ENCODE measurements at regions of chrX and their contacts with region 1.

Region 1: DNA sequence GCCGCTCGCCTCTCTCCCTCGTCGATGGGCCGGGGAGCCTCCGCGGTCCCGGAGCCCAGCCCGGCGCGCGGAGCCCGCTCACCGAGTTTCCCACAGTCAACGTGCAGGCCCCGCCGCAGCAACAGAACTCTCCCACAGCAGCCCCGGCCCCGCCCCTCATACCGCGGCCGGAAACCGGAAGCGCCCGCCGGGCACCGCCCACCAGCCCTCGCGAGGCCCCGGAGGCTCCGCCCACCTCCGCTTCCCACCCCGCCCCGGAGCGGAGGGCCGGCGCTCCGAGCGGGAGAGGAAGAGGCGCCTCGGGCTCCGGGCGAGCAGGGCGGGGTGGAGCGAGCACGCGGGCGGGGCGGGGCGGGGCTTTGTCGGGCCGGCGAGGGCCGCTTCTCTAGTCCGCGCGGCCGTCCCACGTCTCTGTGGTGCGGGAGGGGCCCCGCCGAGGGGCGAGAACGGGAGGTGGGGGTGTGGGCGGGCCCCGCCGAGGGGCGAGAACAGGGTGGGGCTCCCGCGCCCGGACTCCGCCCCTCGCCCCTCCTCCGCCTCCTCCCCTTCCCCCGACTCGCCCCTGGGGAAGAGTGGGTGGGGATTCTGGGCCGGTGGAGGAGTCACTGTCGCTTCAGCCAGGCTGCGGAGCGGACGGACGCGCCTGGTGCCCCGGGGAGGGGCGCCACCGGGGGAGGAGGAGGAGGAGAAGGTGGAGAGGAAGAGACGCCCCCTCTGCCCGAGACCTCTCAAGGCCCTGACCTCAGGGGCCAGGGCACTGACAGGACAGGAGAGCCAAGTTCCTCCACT is at the starts of genes ABCD1 and BCAP31:
- DNase-seq: peak; percentile 82 to 93 (median 91)
- ATAC-seq: peak; percentile 88
- H3K4me3 ChIP-seq: peak within 1 kb of the TSS; percentile 55
- H3K4me3 Mint-ChIP-seq: peak within 1 kb of the TSS; percentile 75 to 95 (median 86)
- H3K27ac ChIP-seq: peak within 1 kb of the TSS; percentile 80
- H3K27ac Mint-ChIP-seq: peak within 1 kb of the TSS in 8 of 9 donors; percentile 55 to 87 (median 72)
- H3K4me1 ChIP-seq: peaks cover 10 to 29% of the 10 kb centered on the region in 2 donors
- H3K4me1 Mint-ChIP-seq: peaks cover 9 to 37% (median 28%) of the 10 kb centered on the region in 7 donors
- H3K27me3 ChIP-seq: no peaks in the 10 kb centered on the region
- H3K27me3 Mint-ChIP-seq: no peaks in the 10 kb centered on the region
- total RNA-seq, gene ABCD1: 6.6 to 17.6 (median 10.2) TPM
- total RNA-seq, gene BCAP31: 80.2 to 153 (median 117) TPM

Region 2: DNA sequence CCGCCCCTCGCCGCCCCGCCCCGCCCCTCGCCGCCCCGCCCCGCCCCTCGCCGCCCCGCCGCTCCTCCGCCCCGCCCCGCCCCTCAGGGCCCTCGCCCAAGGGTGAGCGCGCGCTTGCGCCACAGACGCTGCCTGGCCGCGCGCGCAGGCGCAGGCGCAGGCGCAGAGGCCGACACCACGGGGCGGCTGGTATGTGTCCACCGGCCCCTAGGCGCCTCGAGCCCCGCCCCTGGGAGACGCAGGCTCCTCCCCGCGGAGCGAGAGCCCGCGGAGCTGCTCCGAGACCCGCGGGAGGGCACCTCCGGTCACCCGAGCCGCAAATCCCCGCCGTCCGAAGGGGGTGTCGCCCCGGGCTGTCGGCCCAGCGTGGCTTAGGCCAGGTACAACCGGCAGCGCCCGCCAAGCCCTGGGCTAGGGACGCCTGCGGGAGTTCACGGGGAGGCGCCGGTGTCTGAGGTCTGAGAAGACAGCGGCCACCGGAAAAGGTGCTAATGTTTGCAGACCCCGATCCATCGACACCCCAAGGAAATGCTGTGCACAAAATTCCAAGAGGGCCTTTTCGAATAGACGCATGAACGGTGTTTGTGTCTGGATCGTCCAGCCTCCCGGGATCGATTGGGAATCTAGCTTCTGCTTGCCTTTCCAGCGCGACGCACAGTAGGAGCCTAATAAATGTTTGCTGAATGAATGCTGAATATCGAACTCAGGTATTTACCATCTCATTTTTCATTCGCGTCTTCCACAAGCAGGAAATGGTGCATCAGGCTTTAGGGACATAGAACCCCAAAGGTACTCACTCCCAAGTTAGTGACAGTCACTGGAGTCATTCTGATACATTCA is 125.0 kb before region 1 on chrX:
- CTCF ChIA-PET with region 1: no interaction called
- POLR2A ChIA-PET with region 1: no interaction called
- intact Hi-C with region 1: loop called (anchors 1 kb)
- DNase-seq: peak; percentile 77 to 91 (median 82)
- ATAC-seq: peak; percentile 94
- H3K4me3 ChIP-seq: peak overlapping the region; percentile 69
- H3K4me3 Mint-ChIP-seq: peak overlapping the region; percentile 79 to 93 (median 90)
- H3K27ac ChIP-seq: peak overlapping the region; percentile 74
- H3K27ac Mint-ChIP-seq: peak overlapping the region in 7 of 9 donors; percentile 48 to 83 (median 64)
- H3K4me1 ChIP-seq: peaks cover 19 to 21% of the 10 kb centered on the region in 2 donors
- H3K4me1 Mint-ChIP-seq: peaks cover 23 to 60% (median 46%) of the 10 kb centered on the region in 7 donors
- H3K27me3 ChIP-seq: no peaks in the 10 kb centered on the region
- H3K27me3 Mint-ChIP-seq: no peaks in the 10 kb centered on the region

Region 3: GRCh38 chrX:153739754-153740486 is 15.5 kb after region 1 on chrX:
- CTCF ChIA-PET with region 1: no interaction called
- POLR2A ChIA-PET with region 1: interaction called, 5 read pairs
- intact Hi-C with region 1: loop called in 1 of 2 experiments (anchors 1 kb)
- DNase-seq: peak in 5 of 9 donors; percentile 32 to 45 (median 35)
- ATAC-seq: peak; percentile 64
- H3K4me3 ChIP-seq: no peak overlapping the region
- H3K4me3 Mint-ChIP-seq: peak overlapping the region; percentile 45 to 86 (median 76)
- H3K27ac ChIP-seq: peak overlapping the region; percentile 40
- H3K27ac Mint-ChIP-seq: peak overlapping the region; percentile 56 to 91 (median 78)
- H3K4me1 ChIP-seq: peaks cover 5 to 17% of the 10 kb centered on the region in 2 donors
- H3K4me1 Mint-ChIP-seq: peaks cover 0 to 34% (median 25%) of the 10 kb centered on the region in 7 donors
- H3K27me3 ChIP-seq: no peaks in the 10 kb centered on the region
- H3K27me3 Mint-ChIP-seq: no peaks in the 10 kb centered on the region

Region 4: GRCh38 chrX:154515878-154516655 is 791.6 kb after region 1 on chrX and contains the start of gene FAM3A:
- CTCF ChIA-PET with region 1: no interaction called
- POLR2A ChIA-PET with region 1: no interaction called
- intact Hi-C with region 1: loop called (anchors 1 kb)
- DNase-seq: peak; percentile 85 to 91 (median 88)
- ATAC-seq: peak; percentile 99
- H3K4me3 ChIP-seq: peak within 1 kb of the TSS; percentile 62
- H3K4me3 Mint-ChIP-seq: peak within 1 kb of the TSS; percentile 79 to 93 (median 86)
- H3K27ac ChIP-seq: peak within 1 kb of the TSS; percentile 93
- H3K27ac Mint-ChIP-seq: peak within 1 kb of the TSS; percentile 56 to 95 (median 90)
- H3K4me1 ChIP-seq: peaks cover 6 to 12% of the 10 kb centered on the region in 2 donors
- H3K4me1 Mint-ChIP-seq: peaks cover 13 to 34% (median 27%) of the 10 kb centered on the region in 7 donors
- H3K27me3 ChIP-seq: no peaks in the 10 kb centered on the region
- H3K27me3 Mint-ChIP-seq: no peaks in the 10 kb centered on the region
- total RNA-seq, gene FAM3A: 37.6 to 63.7 (median 50.9) TPM

Measured in naive thymus-derived CD4-positive, alpha-beta T cell (primary cell).